Caco-2 (cell line): ENCODE measurements at regions of chr22 and their contacts with region 1.

Region 1: GRCh38 chr22:28951969-28952521 is 68.7 kb downstream of the ZNRF3 start:
- DNase-seq: peak; percentile 75 to 78
- H3K4me3 ChIP-seq: no peak overlapping the region
- H3K4me3 Mint-ChIP-seq: peak overlapping the region; percentile 28
- H3K27ac Mint-ChIP-seq: peak overlapping the region; percentile 91
- H3K4me1 ChIP-seq: peaks cover 63% of the 10 kb centered on the region
- H3K4me1 Mint-ChIP-seq: peaks cover 48% of the 10 kb centered on the region
- H3K27me3 ChIP-seq: no peaks in the 10 kb centered on the region
- H3K27me3 Mint-ChIP-seq: no peaks in the 10 kb centered on the region
- CTCF ChIP-seq: peak in 1 of 2 experiments; percentile 62

Region 2: GRCh38 chr22:28855355-28856094 is 96.5 kb before region 1 on chr22:
- CTCF ChIA-PET with region 1: interaction called, 8 read pairs
- POLR2A ChIA-PET with region 1: no interaction called
- intact Hi-C with region 1: loop called (anchors 1 kb)
- DNase-seq: peak; percentile 52 to 73
- H3K4me3 ChIP-seq: no peak overlapping the region
- H3K4me3 Mint-ChIP-seq: no peak overlapping the region
- H3K27ac Mint-ChIP-seq: no peak overlapping the region
- H3K4me1 ChIP-seq: peaks cover 10% of the 10 kb centered on the region
- H3K4me1 Mint-ChIP-seq: peaks cover 10% of the 10 kb centered on the region
- H3K27me3 ChIP-seq: no peaks in the 10 kb centered on the region
- H3K27me3 Mint-ChIP-seq: no peaks in the 10 kb centered on the region
- CTCF ChIP-seq: peak; percentile 89 to 91

Region 3: DNA sequence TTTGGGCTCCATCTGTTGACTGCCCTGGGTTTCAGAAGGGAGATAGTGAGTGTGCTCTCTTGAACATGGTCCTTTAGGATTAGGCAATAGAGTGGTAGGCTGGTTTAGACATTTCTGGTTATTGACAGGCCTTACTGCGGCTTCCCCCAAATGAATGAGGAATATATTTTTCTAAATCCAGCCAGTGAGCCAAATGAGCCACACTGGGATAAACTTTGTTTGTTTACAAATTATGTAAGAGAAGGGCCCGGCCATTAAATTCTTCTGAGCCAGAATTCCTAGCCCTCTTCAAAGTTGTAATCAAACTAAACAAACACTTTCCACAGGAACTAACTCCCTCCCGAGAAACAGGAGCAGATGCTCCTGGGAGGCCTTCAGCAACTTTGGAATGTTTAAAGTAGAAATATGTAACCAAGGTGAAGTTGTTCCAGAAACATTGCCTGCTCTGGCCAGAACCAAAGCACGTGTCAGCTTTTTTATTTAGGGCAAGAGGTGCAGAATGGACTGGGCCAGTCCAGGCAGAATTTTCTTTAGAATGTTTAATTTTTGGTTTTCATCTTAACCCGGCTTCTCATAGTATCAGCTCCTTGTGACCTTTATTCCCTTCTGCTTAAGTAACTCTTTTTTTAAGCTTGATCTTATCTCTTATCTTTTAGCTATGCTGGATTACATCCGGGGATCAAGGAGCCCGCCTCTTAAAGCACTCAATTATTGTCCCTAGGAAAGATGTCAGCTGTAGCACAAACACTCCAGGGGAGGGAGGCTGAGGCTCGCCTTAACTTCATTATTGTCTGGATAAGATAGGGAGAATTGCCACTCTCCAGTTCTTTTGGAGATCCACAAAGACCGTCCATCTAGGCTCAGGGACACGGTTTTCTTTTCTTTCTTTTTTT is 40.0 kb before region 1 on chr22:
- CTCF ChIA-PET with region 1: interaction called, 13 read pairs
- POLR2A ChIA-PET with region 1: interaction called, 8 read pairs
- intact Hi-C with region 1: loop called (anchors 1 kb)
- DNase-seq: peak; percentile 87 to 94
- H3K4me3 ChIP-seq: no peak overlapping the region
- H3K4me3 Mint-ChIP-seq: peak overlapping the region; percentile 59
- H3K27ac Mint-ChIP-seq: peak overlapping the region; percentile 91
- H3K4me1 ChIP-seq: peaks cover 75% of the 10 kb centered on the region
- H3K4me1 Mint-ChIP-seq: peaks cover 52% of the 10 kb centered on the region
- H3K27me3 ChIP-seq: no peaks in the 10 kb centered on the region
- H3K27me3 Mint-ChIP-seq: no peaks in the 10 kb centered on the region
- CTCF ChIP-seq: no peak

Region 4: DNA sequence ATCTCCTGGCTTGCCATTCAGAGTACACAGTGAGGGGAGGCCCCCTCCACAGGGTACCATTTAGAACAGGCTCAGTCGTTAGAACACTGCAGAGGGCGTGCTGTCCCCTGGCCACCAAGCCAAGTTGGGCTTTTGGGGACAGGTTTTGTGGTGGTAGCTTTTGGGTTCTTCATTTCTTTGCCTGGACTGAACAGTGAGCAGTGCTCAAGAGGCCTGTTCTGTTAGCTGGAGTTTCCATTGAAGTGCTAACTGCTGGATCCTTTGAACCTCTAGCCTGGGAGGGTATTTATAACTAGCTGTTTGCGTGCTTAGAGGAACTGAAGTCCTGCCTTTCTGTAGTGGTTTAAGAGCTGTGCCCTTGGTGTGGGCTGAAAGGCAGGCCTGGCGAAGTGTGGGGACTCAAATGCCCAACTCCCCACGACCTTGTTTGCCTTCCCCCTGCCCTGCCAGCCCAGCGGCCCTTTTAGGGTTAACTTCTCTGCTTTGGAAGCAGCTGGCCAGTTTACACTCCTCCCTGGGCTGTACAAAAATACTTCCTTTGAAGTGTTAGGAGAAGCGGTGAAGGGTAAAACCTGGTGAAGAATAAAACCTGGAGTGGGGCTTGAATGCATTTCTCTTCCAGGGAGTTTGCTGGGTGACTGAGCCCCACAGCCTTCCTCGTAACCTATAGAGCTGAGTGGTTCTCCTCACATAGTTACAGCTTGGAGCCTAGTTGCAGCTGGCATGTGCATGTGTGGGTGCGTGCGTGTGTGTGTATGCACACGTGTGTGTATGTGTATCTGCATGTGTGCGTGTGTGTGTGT is 34.1 kb before region 1 on chr22:
- CTCF ChIA-PET with region 1: interaction called, 15 read pairs
- POLR2A ChIA-PET with region 1: no interaction called
- intact Hi-C with region 1: no loop called
- DNase-seq: peak; percentile 69 to 71
- H3K4me3 ChIP-seq: no peak overlapping the region
- H3K4me3 Mint-ChIP-seq: peak overlapping the region; percentile 32
- H3K27ac Mint-ChIP-seq: peak overlapping the region; percentile 54
- H3K4me1 ChIP-seq: peaks cover 86% of the 10 kb centered on the region
- H3K4me1 Mint-ChIP-seq: peaks cover 64% of the 10 kb centered on the region
- H3K27me3 ChIP-seq: no peaks in the 10 kb centered on the region
- H3K27me3 Mint-ChIP-seq: no peaks in the 10 kb centered on the region
- CTCF ChIP-seq: no peak

Region 5: GRCh38 chr22:29040385-29041275 is 88.6 kb after region 1 on chr22:
- CTCF ChIA-PET with region 1: interaction called, 10 read pairs
- POLR2A ChIA-PET with region 1: no interaction called
- intact Hi-C with region 1: loop called (anchors 2 kb)
- DNase-seq: peak; percentile 56 to 63
- H3K4me3 ChIP-seq: no peak overlapping the region
- H3K4me3 Mint-ChIP-seq: no peak overlapping the region
- H3K27ac Mint-ChIP-seq: no peak overlapping the region
- H3K4me1 ChIP-seq: peaks cover 38% of the 10 kb centered on the region
- H3K4me1 Mint-ChIP-seq: peaks cover 7% of the 10 kb centered on the region
- H3K27me3 ChIP-seq: no peaks in the 10 kb centered on the region
- H3K27me3 Mint-ChIP-seq: no peaks in the 10 kb centered on the region
- CTCF ChIP-seq: peak; percentile 90 to 93